Posterior vena cava (tissue), 2 donors: ENCODE measurements at regions of chr13 and their contacts with region 1.

Region 1: GRCh38 chr13:36395280-36395679 is 37.0 kb upstream of the CCNA1 start:
- DNase-seq: no peak

Region 2: GRCh38 chr13:35599384-35599783 is 795.9 kb before region 1 on chr13:
- intact Hi-C with region 1: no loop called
- DNase-seq: no peak

Region 3: GRCh38 chr13:36282818-36283445 is 112.3 kb before region 1 on chr13:
- intact Hi-C with region 1: loop called in 1 of 2 experiments (anchors 10 kb)
- DNase-seq: no peak

Region 4: DNA sequence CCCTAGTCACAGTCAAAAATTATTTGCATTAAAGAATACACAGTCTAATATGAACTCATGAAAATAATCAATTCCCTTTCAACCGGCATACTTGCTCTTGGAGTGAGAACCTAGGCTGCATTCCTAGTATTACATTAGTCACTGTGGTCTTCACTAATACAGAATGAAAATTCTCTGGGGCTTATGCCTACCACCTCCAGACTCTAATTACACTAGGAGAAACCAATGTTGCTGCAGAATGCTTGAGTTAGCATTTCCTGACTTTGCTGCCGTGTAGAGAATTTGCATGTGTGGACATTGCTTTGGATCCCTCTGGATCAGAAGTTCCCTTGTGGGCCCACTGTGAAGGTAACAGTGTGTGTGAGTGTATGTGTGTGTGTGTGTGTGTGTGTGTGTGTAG is 124.8 kb after region 1 on chr13:
- intact Hi-C with region 1: no loop called
- DNase-seq: no peak